Motor neuron (in vitro differentiated cells): ENCODE measurements at regions of chr17 and their contacts with region 1.

Region 1: GRCh38 chr17:20103454-20104446 is 94.6 kb downstream of the SPECC1 start:
- ATAC-seq: peak; percentile 34 to 82 (median 69)
- H3K4me3 ChIP-seq: no peak overlapping the region
- H3K27ac ChIP-seq: no peak overlapping the region
- H3K4me1 ChIP-seq: peaks cover 0 to 11% of the 10 kb centered on the region in 2 donors

Region 2: GRCh38 chr17:20009302-20010098 is 94.2 kb before region 1 on chr17 and contains the start of gene SPECC1:
- in situ Hi-C with region 1: loop called in 3 of 9 experiments (anchors 10 kb)
- ATAC-seq: peak; percentile 90 to 97 (median 95)
- H3K4me3 ChIP-seq: peak within 1 kb of the TSS; percentile 46 to 65 (median 54)
- H3K27ac ChIP-seq: no peak within 1 kb of the TSS
- H3K4me1 ChIP-seq: peaks cover 0 to 5% of the 10 kb centered on the region in 2 donors
- total RNA-seq, gene SPECC1: 25.8 to 269 (median 79.5) TPM

Region 3: GRCh38 chr17:20234276-20234675 is 130.5 kb after region 1 on chr17:
- in situ Hi-C with region 1: no loop called
- ATAC-seq: no peak
- H3K4me3 ChIP-seq: no peak overlapping the region
- H3K27ac ChIP-seq: no peak overlapping the region
- H3K4me1 ChIP-seq: peaks cover 6% of the 10 kb centered on the region in 2 donors